ENCODE measurements at regions of chr6 and their contacts with region 1.

Region 1: GRCh38 chr6:158231551-158232315 is 63.6 kb downstream of the GTF2H5 start:
- DNase-seq: peak; percentile 37 to 89 (median 69)
- ATAC-seq: peak; percentile 72
- H3K4me3 ChIP-seq: peak overlapping the region; percentile 62 to 67
- H3K4me3 Mint-ChIP-seq: peak overlapping the region; percentile 84
- H3K27ac ChIP-seq: peak overlapping the region; percentile 52 to 68
- H3K27ac Mint-ChIP-seq: peak overlapping the region; percentile 87
- H3K4me1 ChIP-seq: peaks cover 10% of the 10 kb centered on the region
- H3K4me1 Mint-ChIP-seq: peaks cover 37% of the 10 kb centered on the region
- H3K27me3 ChIP-seq: no peaks in the 10 kb centered on the region
- H3K27me3 Mint-ChIP-seq: no peaks in the 10 kb centered on the region
- CTCF ChIP-seq: no peak

Region 2: DNA sequence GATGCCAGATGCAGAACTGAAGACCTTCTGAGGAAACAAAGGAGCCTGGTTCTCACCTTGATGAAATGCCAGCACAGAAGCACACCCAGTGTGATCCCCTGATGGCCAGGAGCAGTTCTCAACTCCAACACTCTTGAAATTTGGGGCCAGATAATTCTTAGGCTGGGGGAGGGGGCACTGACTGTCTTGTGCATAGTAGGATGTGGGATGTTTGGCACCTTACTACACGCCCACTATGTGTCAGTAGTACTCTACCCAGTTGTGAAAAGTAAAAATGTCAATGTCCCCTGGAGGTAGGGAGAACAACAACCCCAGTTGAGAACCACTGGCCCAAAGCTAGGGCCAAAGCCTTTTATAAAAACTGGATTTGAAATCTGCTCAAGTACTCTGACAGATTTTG is 1852.9 kb before region 1 on chr6:
- CTCF ChIA-PET with region 1: no interaction called
- POLR2A ChIA-PET with region 1: no interaction called
- intact Hi-C with region 1: no loop called
- DNase-seq: peak in 2 of 9 experiments; percentile 23 to 45
- ATAC-seq: peak; percentile 48
- H3K4me3 ChIP-seq: no peak overlapping the region
- H3K4me3 Mint-ChIP-seq: no peak overlapping the region
- H3K27ac ChIP-seq: no peak overlapping the region
- H3K27ac Mint-ChIP-seq: no peak overlapping the region
- H3K4me1 ChIP-seq: no peaks in the 10 kb centered on the region
- H3K4me1 Mint-ChIP-seq: no peaks in the 10 kb centered on the region
- H3K27me3 ChIP-seq: no peaks in the 10 kb centered on the region
- H3K27me3 Mint-ChIP-seq: no peaks in the 10 kb centered on the region
- CTCF ChIP-seq: no peak

Region 3: GRCh38 chr6:158220786-158221442 is 10.8 kb before region 1 on chr6:
- CTCF ChIA-PET with region 1: interaction called, 16 read pairs
- POLR2A ChIA-PET with region 1: interaction called, 3 read pairs
- intact Hi-C with region 1: no loop called
- DNase-seq: peak; percentile 48 to 84 (median 75)
- ATAC-seq: peak; percentile 91
- H3K4me3 ChIP-seq: no peak overlapping the region
- H3K4me3 Mint-ChIP-seq: no peak overlapping the region
- H3K27ac ChIP-seq: no peak overlapping the region
- H3K27ac Mint-ChIP-seq: no peak overlapping the region
- H3K4me1 ChIP-seq: no peaks in the 10 kb centered on the region
- H3K4me1 Mint-ChIP-seq: peaks cover 3% of the 10 kb centered on the region
- H3K27me3 ChIP-seq: no peaks in the 10 kb centered on the region
- H3K27me3 Mint-ChIP-seq: no peaks in the 10 kb centered on the region
- CTCF ChIP-seq: peak; percentile 99

Region 4: DNA sequence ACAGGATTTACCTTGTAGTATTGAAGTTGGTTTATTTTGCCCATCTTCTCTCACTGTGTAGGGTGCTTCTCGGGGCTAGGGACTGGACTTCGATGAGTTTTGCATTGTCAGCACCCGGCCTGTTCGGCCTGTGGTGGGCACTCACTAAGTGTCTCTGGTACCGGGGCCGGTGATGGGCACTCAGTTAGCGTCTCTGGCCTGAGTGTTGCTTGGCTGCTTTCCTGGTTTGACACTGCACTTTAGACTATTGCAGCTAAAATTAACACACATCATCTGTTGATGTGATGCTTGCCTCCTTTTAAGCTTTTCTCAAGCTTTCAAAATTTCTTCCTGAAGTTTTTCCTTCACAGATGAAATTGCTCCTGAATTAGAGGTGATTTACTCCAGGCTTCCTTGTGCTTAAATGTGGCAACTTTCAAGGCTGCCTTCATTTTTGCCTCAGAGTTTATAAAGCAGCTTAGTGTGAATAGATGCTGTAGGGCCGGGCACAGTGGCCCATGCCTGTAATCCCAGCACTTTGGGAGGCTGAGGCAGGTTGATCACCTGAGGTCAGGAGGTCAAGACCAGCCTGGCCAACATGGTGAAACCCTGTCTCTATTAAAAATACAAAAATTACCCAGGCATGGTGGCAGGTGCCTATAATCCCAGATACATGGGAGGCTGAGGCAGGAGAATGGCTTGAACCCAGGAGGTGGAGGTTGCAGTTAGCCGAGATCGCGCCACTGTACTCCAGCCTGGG is 38.8 kb after region 1 on chr6:
- CTCF ChIA-PET with region 1: no interaction called
- POLR2A ChIA-PET with region 1: no interaction called
- intact Hi-C with region 1: loop called (anchors 5 kb)
- DNase-seq: peak in 1 of 9 experiments; percentile 32
- ATAC-seq: no peak
- H3K4me3 ChIP-seq: peak overlapping the region in 1 of 2 experiments; percentile 17
- H3K4me3 Mint-ChIP-seq: peak overlapping the region; percentile 45
- H3K27ac ChIP-seq: peak overlapping the region; percentile 29 to 52
- H3K27ac Mint-ChIP-seq: peak overlapping the region; percentile 78
- H3K4me1 ChIP-seq: peaks cover 14% of the 10 kb centered on the region
- H3K4me1 Mint-ChIP-seq: peaks cover 27% of the 10 kb centered on the region
- H3K27me3 ChIP-seq: no peaks in the 10 kb centered on the region
- H3K27me3 Mint-ChIP-seq: no peaks in the 10 kb centered on the region
- CTCF ChIP-seq: no peak

Region 5: DNA sequence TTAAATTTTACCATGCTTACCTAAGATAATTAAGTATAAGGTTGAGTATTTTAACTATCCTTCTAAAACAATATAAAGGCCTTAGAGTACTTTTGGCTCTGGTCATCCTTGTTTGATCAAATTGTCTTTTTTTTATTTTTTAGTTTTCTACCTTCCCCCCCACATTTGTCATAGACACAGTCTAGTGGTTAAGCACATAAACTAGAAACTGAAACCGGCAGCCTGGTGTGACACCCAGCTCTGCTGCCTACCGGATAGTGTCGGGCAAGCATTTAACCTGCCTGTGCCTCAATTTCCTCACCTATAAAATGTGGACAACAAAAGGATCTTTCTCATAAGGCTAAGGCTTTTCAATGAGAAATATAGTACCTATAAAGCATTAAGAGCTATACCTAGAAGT is 58.9 kb after region 1 on chr6:
- CTCF ChIA-PET with region 1: no interaction called
- POLR2A ChIA-PET with region 1: no interaction called
- intact Hi-C with region 1: loop called (anchors 5 kb)
- DNase-seq: peak in 8 of 9 experiments; percentile 30 to 84 (median 65)
- ATAC-seq: peak; percentile 98
- H3K4me3 ChIP-seq: peak overlapping the region; percentile 11 to 25
- H3K4me3 Mint-ChIP-seq: peak overlapping the region; percentile 78
- H3K27ac ChIP-seq: peak overlapping the region; percentile 18 to 74
- H3K27ac Mint-ChIP-seq: peak overlapping the region; percentile 91
- H3K4me1 ChIP-seq: peaks cover 27% of the 10 kb centered on the region
- H3K4me1 Mint-ChIP-seq: peaks cover 54% of the 10 kb centered on the region
- H3K27me3 ChIP-seq: no peaks in the 10 kb centered on the region
- H3K27me3 Mint-ChIP-seq: no peaks in the 10 kb centered on the region
- CTCF ChIP-seq: no peak

Region 6: GRCh38 chr6:158559895-158560835 is 328.4 kb after region 1 on chr6 and contains the start of gene TMEM181:
- CTCF ChIA-PET with region 1: no interaction called
- POLR2A ChIA-PET with region 1: no interaction called
- intact Hi-C with region 1: loop called (anchors 5 kb)
- DNase-seq: peak; percentile 72 to 95 (median 87)
- ATAC-seq: peak; percentile 89
- H3K4me3 ChIP-seq: peak within 1 kb of the TSS; percentile 61
- H3K4me3 Mint-ChIP-seq: peak within 1 kb of the TSS; percentile 92
- H3K27ac ChIP-seq: peak within 1 kb of the TSS; percentile 74 to 87
- H3K27ac Mint-ChIP-seq: peak within 1 kb of the TSS; percentile 90
- H3K4me1 ChIP-seq: peaks cover 31% of the 10 kb centered on the region
- H3K4me1 Mint-ChIP-seq: peaks cover 45% of the 10 kb centered on the region
- H3K27me3 ChIP-seq: no peaks in the 10 kb centered on the region
- H3K27me3 Mint-ChIP-seq: no peaks in the 10 kb centered on the region
- CTCF ChIP-seq: no peak
- total RNA-seq, gene TMEM181: 9.3 to 10.3 TPM

Region 7: DNA sequence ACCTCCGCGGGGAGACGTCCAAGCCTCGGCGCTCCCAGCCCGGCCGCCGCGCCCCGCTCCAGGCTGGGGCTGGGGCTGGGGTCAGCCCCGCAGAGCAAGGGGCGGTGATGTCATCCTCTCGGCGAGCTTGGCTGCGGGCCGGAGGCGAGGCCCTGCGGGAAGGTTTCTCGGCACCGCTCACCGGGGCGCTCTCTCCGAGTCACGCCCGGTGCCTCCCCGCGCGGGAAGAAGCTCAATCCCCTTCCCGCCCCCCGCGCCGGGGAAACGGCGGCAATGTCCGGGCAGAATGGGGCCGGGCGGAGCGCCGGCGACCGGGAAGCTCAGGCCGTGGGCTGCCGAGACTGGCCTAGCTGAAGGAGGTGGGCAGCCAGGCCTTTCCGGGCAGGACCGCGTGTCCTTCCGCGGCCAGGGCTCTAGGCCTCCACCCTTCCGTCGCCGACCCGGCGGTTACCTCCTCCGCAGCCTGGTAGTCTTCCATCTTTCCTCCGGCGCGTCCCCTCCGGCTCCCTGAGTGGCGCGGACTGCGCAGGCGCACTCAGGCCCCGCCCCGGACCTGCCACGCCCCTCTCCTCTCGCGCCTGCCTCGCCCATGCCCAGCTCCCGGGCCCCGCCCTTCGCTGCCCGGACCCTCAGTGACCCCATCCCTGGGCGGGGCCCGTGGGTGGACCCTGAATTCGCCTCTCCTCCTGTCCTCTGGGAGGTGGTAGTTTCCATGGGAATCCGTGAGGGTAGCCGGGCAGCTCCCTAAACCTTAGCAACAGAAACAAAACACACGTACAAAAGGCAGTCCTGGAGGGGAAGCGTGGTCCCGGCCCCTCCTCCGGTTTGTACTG is 412.7 kb after region 1 on chr6 and contains the start of gene DYNLT1:
- CTCF ChIA-PET with region 1: no interaction called
- POLR2A ChIA-PET with region 1: no interaction called
- intact Hi-C with region 1: loop called in 1 of 2 experiments (anchors 5 kb)
- DNase-seq: peak; percentile 77 to 92 (median 85)
- ATAC-seq: peak; percentile 67
- H3K4me3 ChIP-seq: peak within 1 kb of the TSS; percentile 77 to 84
- H3K4me3 Mint-ChIP-seq: peak within 1 kb of the TSS; percentile 97
- H3K27ac ChIP-seq: peak within 1 kb of the TSS; percentile 93 to 94
- H3K27ac Mint-ChIP-seq: peak within 1 kb of the TSS; percentile 96
- H3K4me1 ChIP-seq: peaks cover 49% of the 10 kb centered on the region
- H3K4me1 Mint-ChIP-seq: peaks cover 63% of the 10 kb centered on the region
- H3K27me3 ChIP-seq: no peaks in the 10 kb centered on the region
- H3K27me3 Mint-ChIP-seq: no peaks in the 10 kb centered on the region
- CTCF ChIP-seq: no peak
- total RNA-seq, gene DYNLT1: 109 TPM

Region 8: DNA sequence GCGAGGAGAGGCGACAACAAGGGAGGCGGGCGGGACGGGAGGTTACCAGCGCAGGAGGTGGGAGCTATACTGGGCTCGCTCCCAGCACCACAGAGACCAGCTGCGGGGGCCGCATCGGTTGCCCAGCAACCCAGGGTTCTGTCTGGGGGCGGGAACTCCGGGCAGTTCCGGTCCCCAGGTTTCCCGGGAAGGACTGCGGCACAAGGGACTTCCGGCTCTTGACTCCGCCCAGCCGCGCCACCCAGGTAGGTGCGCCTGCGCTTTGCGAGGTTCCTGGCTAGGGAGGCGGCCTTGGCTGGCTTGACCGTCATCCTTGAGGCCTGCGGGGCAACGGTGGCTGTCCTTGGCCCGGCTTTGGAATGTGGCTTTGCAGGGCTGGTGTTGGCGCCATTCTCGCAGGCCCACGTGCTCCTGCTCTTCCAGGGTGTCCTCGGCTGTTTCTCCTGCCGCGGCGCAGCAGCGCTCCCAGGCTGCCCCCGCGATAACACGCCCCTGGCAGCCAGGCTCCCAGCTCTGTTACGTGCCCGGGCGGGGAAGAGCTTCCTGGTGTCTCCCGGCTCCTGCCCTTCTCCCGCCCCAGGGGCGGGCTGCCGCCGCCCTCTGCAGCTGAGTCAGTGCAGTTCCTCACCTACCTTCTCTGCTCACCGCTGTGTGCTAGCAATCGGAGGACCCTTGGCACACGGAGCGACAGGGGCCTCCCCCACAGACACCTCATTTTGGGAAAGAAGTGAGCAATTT is 768.1 kb after region 1 on chr6 and contains the start of gene RSPH3:
- CTCF ChIA-PET with region 1: no interaction called
- POLR2A ChIA-PET with region 1: no interaction called
- intact Hi-C with region 1: loop called in 1 of 2 experiments (anchors 2 kb)
- DNase-seq: peak; percentile 62 to 93 (median 87)
- ATAC-seq: peak; percentile 85
- H3K4me3 ChIP-seq: peak within 1 kb of the TSS; percentile 91 to 95
- H3K4me3 Mint-ChIP-seq: peak within 1 kb of the TSS; percentile 95
- H3K27ac ChIP-seq: peak within 1 kb of the TSS; percentile 65 to 73
- H3K27ac Mint-ChIP-seq: peak within 1 kb of the TSS; percentile 88
- H3K4me1 ChIP-seq: peaks cover 18% of the 10 kb centered on the region
- H3K4me1 Mint-ChIP-seq: peaks cover 22% of the 10 kb centered on the region
- H3K27me3 ChIP-seq: no peaks in the 10 kb centered on the region
- H3K27me3 Mint-ChIP-seq: no peaks in the 10 kb centered on the region
- CTCF ChIP-seq: no peak
- total RNA-seq, gene RSPH3: 0.52 to 0.83 TPM

Measured in CD8-positive, alpha-beta T cell (primary cell).